CD8-positive, alpha-beta T cell (primary cell): ENCODE measurements at regions of chr19 and their contacts with region 1.

Region 1: DNA sequence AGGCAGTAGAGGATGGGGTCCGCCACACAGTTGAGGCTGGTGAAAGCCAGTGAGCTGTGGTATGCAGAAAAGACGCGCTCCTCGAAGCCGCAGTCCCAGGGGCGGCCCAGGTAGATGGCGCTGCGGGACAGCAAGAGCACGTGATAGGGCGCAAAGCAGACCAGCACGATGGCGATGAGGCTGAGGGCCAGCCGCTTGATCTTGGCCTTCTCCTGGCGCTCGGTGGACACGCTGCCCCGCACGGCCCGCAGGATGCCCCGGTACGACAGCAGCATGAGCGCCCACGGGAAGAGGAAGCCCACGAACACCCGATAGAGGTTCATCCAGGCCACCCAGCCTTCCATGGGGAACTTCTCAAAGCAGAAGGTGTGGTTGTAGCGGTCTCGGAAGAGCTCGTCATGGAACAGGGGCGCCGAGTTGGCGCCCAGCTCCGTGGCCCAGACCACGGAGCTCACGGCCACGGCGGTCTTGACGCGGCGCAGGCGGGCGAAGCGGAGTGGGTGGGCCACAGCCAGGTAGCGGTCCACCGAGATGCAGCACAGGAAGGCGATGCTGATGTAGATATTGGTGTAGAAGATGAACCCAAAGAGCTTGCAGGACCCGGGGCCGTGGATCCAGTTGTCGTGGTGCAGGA is 6.5 kb upstream of the OPA3 start:
- DNase-seq: peak in 6 of 9 experiments; percentile 14 to 49 (median 34)
- ATAC-seq: peak; percentile 63
- H3K4me3 ChIP-seq: no peak overlapping the region
- H3K4me3 Mint-ChIP-seq: no peak overlapping the region
- H3K27ac ChIP-seq: no peak overlapping the region
- H3K27ac Mint-ChIP-seq: no peak overlapping the region
- H3K4me1 ChIP-seq: no peaks in the 10 kb centered on the region
- H3K4me1 Mint-ChIP-seq: no peaks in the 10 kb centered on the region
- H3K27me3 ChIP-seq: peaks cover 0 to 17% of the 10 kb centered on the region in 2 experiments
- H3K27me3 Mint-ChIP-seq: peaks cover 35% of the 10 kb centered on the region
- CTCF ChIP-seq: peak; percentile 31

Region 2: DNA sequence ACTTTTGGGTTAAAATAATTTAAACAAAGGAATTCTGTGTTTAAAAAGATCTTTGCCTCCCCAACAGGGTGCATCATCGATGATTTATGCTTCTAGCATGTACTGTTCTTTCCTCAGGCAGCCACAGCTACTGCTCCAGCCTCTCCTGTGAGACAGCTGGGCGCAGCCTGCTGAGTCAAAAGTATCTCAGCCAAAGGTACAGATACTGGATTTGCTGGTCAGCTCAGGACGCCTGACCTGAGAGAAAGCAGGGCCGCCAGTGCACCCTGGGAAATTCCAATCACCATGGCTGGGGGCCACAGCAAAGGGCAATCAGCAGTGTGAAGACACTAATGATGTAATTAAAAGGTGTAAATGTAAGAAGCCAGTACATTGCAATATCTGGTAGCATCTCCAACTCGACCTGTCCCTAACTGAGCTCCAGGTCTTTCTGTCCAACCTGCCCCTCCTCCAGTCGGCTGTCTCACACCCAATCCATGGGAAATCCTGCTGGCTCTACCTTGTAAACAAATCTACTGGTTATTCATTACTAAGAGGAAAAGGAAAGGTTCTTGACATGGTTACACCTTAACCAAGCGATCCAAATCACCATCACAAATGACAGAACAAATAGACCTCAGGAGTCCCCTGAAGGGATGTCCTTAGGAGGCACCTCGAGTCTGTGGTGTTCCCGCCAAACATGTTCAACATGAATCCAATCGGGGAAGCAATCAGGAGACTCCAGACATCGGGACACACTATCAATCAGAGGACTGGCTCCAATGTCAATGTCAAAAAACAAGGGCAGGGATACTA is 13.8 kb before region 1 on chr19:
- CTCF ChIA-PET with region 1: no interaction called
- POLR2A ChIA-PET with region 1: no interaction called
- intact Hi-C with region 1: loop called in 1 of 2 experiments (anchors 1 kb)
- DNase-seq: no peak
- ATAC-seq: no peak
- H3K4me3 ChIP-seq: no peak overlapping the region
- H3K4me3 Mint-ChIP-seq: no peak overlapping the region
- H3K27ac ChIP-seq: no peak overlapping the region
- H3K27ac Mint-ChIP-seq: no peak overlapping the region
- H3K4me1 ChIP-seq: no peaks in the 10 kb centered on the region
- H3K4me1 Mint-ChIP-seq: peaks cover 17% of the 10 kb centered on the region
- H3K27me3 ChIP-seq: no peaks in the 10 kb centered on the region
- H3K27me3 Mint-ChIP-seq: no peaks in the 10 kb centered on the region
- CTCF ChIP-seq: no peak